Breast epithelium (tissue), 4 donors: ENCODE measurements at regions of chr15 and their contacts with region 1.

Region 1: DNA sequence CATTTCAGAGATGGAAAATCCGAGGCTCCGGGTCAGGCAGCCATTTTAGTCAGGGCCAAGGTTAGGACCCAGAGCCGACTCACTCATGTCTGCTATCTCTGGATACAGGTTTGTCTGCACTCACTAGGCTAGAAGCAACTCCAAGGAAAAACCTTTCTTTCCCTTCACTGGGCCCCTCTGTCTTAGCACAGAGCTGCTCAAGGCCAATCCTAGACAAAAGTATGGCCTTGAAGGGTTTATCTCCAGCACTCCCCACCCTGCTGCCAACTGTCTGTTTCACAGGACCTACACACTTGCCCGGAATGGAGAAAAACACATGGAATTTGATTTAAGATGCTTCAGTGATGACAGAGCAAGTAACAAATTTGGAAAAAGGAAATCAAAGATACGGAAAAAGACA is 25.6 kb downstream of the ACAN start:
- DNase-seq: no peak
- H3K4me3 ChIP-seq: no peak overlapping the region
- H3K27ac ChIP-seq: no peak overlapping the region
- H3K4me1 ChIP-seq: no peaks in the 10 kb centered on the region
- H3K27me3 ChIP-seq: no peaks in the 10 kb centered on the region
- CTCF ChIP-seq: no peak
- POLR2A ChIP-seq: no peak

Region 2: GRCh38 chr15:87827126-87827525 is 1001.7 kb before region 1 on chr15:
- intact Hi-C with region 1: no loop called
- DNase-seq: no peak
- H3K4me3 ChIP-seq: no peak overlapping the region
- H3K27ac ChIP-seq: no peak overlapping the region
- H3K4me1 ChIP-seq: no peaks in the 10 kb centered on the region
- H3K27me3 ChIP-seq: no peaks in the 10 kb centered on the region
- CTCF ChIP-seq: no peak
- POLR2A ChIP-seq: no peak

Region 3: GRCh38 chr15:88788816-88789215 is 40.0 kb before region 1 on chr15:
- intact Hi-C with region 1: no loop called
- DNase-seq: no peak
- H3K4me3 ChIP-seq: no peak overlapping the region
- H3K27ac ChIP-seq: no peak overlapping the region
- H3K4me1 ChIP-seq: no peaks in the 10 kb centered on the region
- H3K27me3 ChIP-seq: peaks cover 0 to 22% of the 10 kb centered on the region in 2 donors
- CTCF ChIP-seq: no peak
- POLR2A ChIP-seq: no peak

Region 4: DNA sequence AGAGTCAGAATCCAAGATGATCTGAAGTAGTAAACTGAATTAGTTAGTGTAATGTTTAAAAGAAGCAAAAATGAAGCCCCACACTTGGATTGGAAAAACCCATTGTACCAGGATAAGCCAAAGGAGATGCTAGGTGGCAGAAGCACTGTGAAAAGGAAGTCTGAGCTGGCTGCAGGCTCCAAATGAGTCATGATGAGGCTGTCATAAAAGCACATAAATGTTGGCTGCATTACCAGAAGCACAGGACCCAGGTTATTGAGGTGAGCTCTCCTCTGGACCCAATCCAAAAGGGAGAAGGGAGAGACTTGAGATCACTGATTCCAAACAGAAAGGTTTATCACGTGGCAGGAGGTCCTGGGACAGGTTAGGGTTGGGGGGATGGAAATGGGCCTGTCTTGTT is 28.8 kb before region 1 on chr15:
- intact Hi-C with region 1: loop called (anchors 1 kb)
- DNase-seq: no peak
- H3K4me3 ChIP-seq: no peak overlapping the region
- H3K27ac ChIP-seq: no peak overlapping the region
- H3K4me1 ChIP-seq: no peaks in the 10 kb centered on the region
- H3K27me3 ChIP-seq: peaks cover 0 to 57% of the 10 kb centered on the region in 2 donors
- CTCF ChIP-seq: no peak
- POLR2A ChIP-seq: no peak

Region 5: DNA sequence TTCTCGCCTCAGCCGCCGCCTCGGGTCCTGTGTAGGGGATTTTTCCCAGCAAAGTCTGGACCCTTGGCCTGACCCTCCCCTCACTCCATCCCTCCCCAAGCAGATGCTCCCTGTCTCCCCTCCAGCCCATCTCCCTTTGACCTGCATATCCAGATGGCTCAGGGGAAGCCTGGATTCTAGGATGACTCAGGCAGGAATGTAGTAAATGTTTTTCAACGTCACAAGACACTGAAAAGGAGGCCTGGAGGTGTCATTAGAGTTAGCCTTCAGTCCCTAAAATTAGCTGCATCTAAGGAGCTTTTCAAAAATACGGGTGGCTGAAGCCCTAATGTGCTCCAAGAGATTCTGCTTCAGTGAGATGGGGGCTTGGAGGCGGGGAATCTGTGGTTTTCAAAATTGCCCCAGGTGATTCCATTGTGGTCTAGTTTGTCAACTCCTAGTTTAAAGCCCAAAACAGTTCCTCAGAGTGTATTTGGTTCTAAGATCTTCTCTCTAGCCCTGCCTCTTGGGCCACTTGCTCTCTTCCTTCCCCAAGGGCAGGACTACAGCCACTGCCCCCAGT is 18.3 kb before region 1 on chr15:
- intact Hi-C with region 1: no loop called
- DNase-seq: no peak
- H3K4me3 ChIP-seq: no peak overlapping the region
- H3K27ac ChIP-seq: no peak overlapping the region
- H3K4me1 ChIP-seq: no peaks in the 10 kb centered on the region
- H3K27me3 ChIP-seq: peaks cover 0 to 10% of the 10 kb centered on the region in 2 donors
- CTCF ChIP-seq: no peak
- POLR2A ChIP-seq: no peak

Region 6: DNA sequence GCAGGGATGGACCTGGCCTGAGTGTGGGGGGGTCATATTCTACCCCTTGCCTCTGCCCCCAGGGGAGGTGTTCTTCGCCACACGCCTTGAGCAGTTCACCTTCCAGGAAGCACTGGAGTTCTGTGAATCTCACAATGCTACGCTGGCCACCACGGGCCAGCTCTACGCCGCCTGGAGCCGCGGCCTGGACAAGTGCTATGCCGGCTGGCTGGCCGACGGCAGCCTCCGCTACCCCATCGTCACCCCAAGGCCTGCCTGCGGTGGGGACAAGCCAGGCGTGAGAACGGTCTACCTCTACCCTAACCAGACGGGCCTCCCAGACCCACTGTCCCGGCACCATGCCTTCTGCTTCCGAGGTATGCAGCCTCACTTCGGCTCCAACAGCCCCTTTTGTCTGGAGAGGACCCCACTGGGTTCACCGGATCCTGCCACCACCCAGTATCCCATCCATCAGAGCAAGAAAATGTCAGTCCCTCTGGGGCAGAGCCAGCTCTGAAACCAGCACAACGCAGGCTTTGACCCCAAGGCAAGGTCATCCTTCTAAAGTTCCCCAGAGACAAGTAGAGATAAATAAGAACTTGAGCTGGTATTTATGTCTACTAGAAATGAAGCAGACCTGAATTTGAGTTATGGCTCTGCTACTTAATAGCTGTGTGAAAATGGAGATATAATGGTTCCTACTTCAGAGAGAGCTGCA is 20.7 kb after region 1 on chr15:
- intact Hi-C with region 1: no loop called
- DNase-seq: no peak
- H3K4me3 ChIP-seq: no peak overlapping the region
- H3K27ac ChIP-seq: no peak overlapping the region
- H3K4me1 ChIP-seq: no peaks in the 10 kb centered on the region
- H3K27me3 ChIP-seq: peaks cover 0 to 17% of the 10 kb centered on the region in 2 donors
- CTCF ChIP-seq: no peak
- POLR2A ChIP-seq: no peak